Activated CD4-positive, alpha-beta T cell treated with anti-CD3 and anti-CD28 coated beads for 36 hours (primary cell): ENCODE measurements at regions of chr3 and their contacts with region 1.

Region 1: DNA sequence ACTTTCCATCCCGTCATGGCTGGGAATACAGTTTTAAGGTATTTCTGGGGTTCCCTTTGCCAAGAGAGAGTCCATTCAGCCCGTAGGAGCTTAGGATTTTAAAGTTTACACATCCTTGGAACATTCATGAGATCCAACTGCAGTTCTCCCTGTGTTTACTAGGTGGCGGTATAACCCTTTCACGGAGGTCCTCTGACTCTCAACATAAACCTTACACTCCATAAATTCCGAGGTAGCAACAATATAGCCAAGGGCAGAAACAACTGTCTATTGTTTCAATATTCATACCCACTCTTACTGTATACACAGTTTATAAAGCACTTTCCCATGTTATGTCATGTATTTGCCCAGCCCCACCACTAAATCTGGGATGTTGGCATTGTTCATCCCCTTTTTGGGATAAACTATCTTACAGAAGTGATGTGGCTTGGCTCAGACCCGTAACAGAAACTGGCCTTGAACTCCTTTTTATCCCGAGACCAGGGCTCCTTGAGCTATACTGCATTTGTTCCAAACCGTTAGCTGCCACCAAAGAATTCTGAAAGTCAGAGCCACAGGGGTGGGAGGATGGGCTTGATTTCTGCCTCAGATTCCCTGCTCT is 69.2 kb upstream of the COL6A5 start:
- DNase-seq: no peak
- ATAC-seq: no peak
- H3K4me3 Mint-ChIP-seq: no peak overlapping the region
- H3K27ac Mint-ChIP-seq: no peak overlapping the region
- H3K4me1 Mint-ChIP-seq: no peaks in the 10 kb centered on the region
- H3K27me3 Mint-ChIP-seq: peaks cover 11% of the 10 kb centered on the region

Region 2: DNA sequence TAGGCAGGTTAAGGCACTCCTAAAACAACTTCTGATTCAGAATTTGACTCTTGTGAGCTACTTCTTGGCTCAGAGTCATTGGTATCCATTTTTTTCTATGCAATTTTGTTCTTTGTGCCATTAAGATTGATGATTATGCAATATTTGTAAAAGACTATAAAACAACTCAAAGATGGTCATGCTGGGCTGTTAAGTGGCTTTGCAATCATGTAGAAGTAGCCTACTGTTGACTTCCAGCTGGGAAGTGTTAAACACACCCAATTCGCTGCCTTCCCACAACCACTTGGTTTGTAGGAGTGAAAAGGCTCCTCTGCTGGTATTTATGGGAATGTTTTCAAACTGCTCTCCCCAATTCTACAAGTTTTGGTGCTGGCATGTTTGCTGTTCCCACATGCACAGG is 166.0 kb after region 1 on chr3:
- CTCF ChIA-PET with region 1: interaction called, 3 read pairs
- POLR2A ChIA-PET with region 1: no interaction called
- intact Hi-C with region 1: loop called in 1 of 2 experiments (anchors 10 kb)
- DNase-seq: no peak
- ATAC-seq: no peak
- H3K4me3 Mint-ChIP-seq: no peak overlapping the region
- H3K27ac Mint-ChIP-seq: no peak overlapping the region
- H3K4me1 Mint-ChIP-seq: no peaks in the 10 kb centered on the region
- H3K27me3 Mint-ChIP-seq: peaks cover 18% of the 10 kb centered on the region

Region 3: GRCh38 chr3:130539005-130539404 is 262.7 kb after region 1 on chr3:
- CTCF ChIA-PET with region 1: interaction called, 6 read pairs
- POLR2A ChIA-PET with region 1: no interaction called
- intact Hi-C with region 1: loop called (anchors 1 to 5 kb)
- DNase-seq: peak; percentile 66
- ATAC-seq: no peak
- H3K4me3 Mint-ChIP-seq: no peak overlapping the region
- H3K27ac Mint-ChIP-seq: no peak overlapping the region
- H3K4me1 Mint-ChIP-seq: no peaks in the 10 kb centered on the region
- H3K27me3 Mint-ChIP-seq: peaks cover 19% of the 10 kb centered on the region

Region 4: GRCh38 chr3:130699765-130700164 is 423.5 kb after region 1 on chr3:
- CTCF ChIA-PET with region 1: no interaction called
- POLR2A ChIA-PET with region 1: no interaction called
- intact Hi-C with region 1: loop called in 1 of 2 experiments (anchors 10 kb)
- DNase-seq: no peak
- ATAC-seq: peak; percentile 36
- H3K4me3 Mint-ChIP-seq: no peak overlapping the region
- H3K27ac Mint-ChIP-seq: no peak overlapping the region
- H3K4me1 Mint-ChIP-seq: no peaks in the 10 kb centered on the region
- H3K27me3 Mint-ChIP-seq: no peaks in the 10 kb centered on the region